ENCODE measurements at regions of chr12 and their contacts with region 1.

Region 1: GRCh38 chr12:32548691-32549281 is 130.3 kb upstream of the DNM1L start:
- DNase-seq: peak; percentile 79
- ATAC-seq: peak; percentile 86
- H3K4me3 ChIP-seq: no peak overlapping the region
- H3K27ac ChIP-seq: no peak overlapping the region; the same call in 1 of the 2 replicates
- H3K4me1 ChIP-seq: peaks cover 11% of the 10 kb centered on the region
- H3K27me3 ChIP-seq: no peaks in the 10 kb centered on the region
- CTCF ChIP-seq: no peak
- POLR2A ChIP-seq: no peak
- RAD21 ChIP-seq: no peak

Region 2: DNA sequence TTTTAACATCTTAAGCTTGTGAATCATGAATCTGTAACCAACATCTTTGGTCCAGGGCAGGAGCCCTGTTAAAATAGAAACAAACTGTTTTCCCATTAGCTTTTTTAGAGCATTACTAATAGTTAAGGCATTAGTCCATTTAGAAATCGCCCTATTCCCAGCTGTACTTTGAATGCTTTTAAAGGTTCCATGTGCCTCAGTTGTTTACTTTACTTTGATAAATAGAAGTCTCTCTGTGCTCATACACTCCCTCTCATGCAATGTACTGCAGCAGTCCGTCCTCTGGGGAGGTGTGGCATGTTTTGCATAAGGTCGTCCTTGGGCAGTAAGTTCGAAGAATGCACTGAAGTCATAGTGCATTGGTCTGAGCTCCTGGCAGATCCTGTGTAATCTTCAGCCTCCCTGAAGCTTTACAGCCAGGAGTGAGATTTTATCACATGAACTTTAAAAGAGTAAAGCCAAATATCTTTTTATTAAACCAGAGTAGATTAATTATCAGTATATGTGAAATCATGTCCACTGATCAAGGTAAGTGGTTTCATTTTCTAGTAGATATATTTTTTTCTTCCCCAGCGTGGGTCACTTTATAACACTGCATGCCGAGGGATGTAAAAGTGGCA is 14.7 kb before region 1 on chr12:
- CTCF ChIA-PET with region 1: no interaction called
- POLR2A ChIA-PET with region 1: interaction called, 3 read pairs
- dilution Hi-C with region 1: no loop called
- in situ Hi-C with region 1: no loop called
- intact Hi-C with region 1: loop called (anchors 2 kb)
- DNase-seq: peak; percentile 98
- ATAC-seq: peak; percentile 90
- H3K4me3 ChIP-seq: peak overlapping the region; percentile 50
- H3K27ac ChIP-seq: peak overlapping the region; percentile 6; the same call in 1 of the 2 replicates
- H3K4me1 ChIP-seq: peaks cover 4% of the 10 kb centered on the region
- H3K27me3 ChIP-seq: no peaks in the 10 kb centered on the region
- CTCF ChIP-seq: no peak
- POLR2A ChIP-seq: peak; percentile 80
- RAD21 ChIP-seq: no peak

Region 3: DNA sequence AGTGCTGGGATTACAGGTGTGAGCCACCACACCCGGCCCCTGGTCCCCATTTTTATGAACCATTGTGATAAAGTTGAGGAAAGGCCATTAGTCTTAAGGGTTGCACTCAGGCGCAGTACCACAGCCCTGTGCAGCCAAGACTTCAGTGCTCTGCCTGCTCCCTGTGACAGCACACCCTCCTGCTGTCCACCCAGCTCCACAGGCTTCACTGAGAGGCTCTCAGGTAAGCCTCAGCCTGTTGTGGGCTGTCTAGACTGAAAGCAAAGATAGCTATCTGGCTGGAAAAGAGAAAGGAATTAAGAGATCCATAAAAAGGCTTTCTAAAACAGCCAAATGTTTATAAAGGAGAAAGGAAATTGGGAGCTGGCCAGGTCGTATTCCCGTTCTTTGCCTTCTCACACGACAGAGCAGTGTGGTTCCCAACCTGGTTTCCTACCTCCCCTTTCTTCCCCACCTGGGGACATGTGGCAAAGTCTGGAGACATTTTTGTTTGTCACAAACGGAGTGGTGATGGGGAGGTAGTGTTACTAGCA is 111.2 kb after region 1 on chr12:
- CTCF ChIA-PET with region 1: no interaction called
- POLR2A ChIA-PET with region 1: no interaction called
- dilution Hi-C with region 1: no loop called
- in situ Hi-C with region 1: no loop called
- intact Hi-C with region 1: loop called (anchors 5 kb)
- DNase-seq: no peak
- ATAC-seq: peak; percentile 47
- H3K4me3 ChIP-seq: no peak overlapping the region
- H3K27ac ChIP-seq: no peak overlapping the region
- H3K4me1 ChIP-seq: 0 out of 2 replicates have a peak, but pooled peaks cover 2% of the 10 kb centered on the region
- H3K27me3 ChIP-seq: no peaks in the 10 kb centered on the region
- CTCF ChIP-seq: no peak
- POLR2A ChIP-seq: no peak
- RAD21 ChIP-seq: no peak

Measured in IMR-90 (cell line).